ENCODE measurements at regions of chr3 and their contacts with region 1.

Region 1: DNA sequence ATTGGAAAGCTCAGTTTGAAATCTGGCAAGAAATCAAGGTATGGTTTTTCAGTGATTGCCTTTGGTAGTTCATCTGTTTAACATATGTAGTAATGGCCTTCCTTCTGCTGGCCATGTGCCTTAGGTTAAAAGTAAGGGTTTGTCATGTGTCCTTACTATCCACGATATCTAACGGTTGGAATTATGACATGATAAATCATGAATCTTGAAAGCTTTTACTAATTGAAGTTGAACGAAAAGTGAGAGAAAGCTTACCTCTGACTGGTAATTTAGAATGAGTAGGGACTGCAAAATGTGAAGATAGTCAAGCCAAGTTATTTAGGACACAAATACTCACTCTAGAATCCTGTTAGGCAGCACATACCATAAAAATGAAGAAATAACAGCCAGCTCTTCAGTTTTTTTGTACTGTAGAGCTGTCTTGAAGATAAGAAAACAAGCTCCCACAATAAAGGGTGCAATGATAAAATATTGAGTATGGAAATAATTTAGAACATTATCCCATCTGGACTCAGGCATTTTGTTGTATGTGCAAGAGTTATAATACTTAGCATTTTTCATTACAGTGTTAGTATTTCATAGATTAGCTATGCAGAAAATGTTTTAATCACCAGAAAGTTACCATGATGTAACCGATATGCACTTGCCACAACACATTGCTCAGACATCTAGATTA is 303.4 kb downstream of the ZNF385D start:
- DNase-seq: no peak
- ATAC-seq: no peak
- H3K4me3 ChIP-seq: no peak overlapping the region
- H3K27ac ChIP-seq: no peak overlapping the region
- H3K4me1 ChIP-seq: no peaks in the 10 kb centered on the region
- H3K27me3 ChIP-seq: no peaks in the 10 kb centered on the region
- CTCF ChIP-seq: no peak
- EP300 ChIP-seq: no peak
- POLR2A ChIP-seq: no peak
- RAD21 ChIP-seq: no peak

Region 2: DNA sequence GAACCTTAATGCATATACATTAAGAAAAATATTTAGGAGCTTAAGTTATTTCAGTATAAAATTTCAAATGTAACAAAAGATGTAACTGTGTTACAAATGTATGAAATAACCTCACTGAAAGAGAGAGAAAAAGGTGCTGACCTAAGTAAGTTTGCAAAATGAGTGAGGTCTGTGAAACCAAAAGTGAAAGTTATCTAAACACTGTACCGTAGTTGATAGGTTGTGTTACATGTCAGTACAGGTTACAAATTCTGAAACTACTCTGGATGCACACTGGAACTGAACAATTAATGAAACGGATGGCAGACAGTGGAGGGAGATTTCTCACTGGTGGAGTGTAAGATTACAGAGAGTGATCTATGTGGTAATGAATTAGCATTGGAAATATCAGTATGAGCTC is 117.3 kb before region 1 on chr3:
- CTCF ChIA-PET with region 1: interaction called, 5 read pairs
- POLR2A ChIA-PET with region 1: no interaction called
- RAD21 ChIA-PET with region 1: interaction called, 11 read pairs
- SMC1A ChIA-PET with region 1: interaction called, 15 read pairs
- in situ Hi-C with region 1: no loop called
- intact Hi-C with region 1: no loop called
- DNase-seq: peak; percentile 9
- ATAC-seq: peak; percentile 98
- H3K4me3 ChIP-seq: no peak overlapping the region
- H3K27ac ChIP-seq: no peak overlapping the region
- H3K4me1 ChIP-seq: no peaks in the 10 kb centered on the region
- H3K27me3 ChIP-seq: no peaks in the 10 kb centered on the region
- CTCF ChIP-seq: no peak
- EP300 ChIP-seq: no peak
- POLR2A ChIP-seq: no peak
- RAD21 ChIP-seq: no peak

Region 3: DNA sequence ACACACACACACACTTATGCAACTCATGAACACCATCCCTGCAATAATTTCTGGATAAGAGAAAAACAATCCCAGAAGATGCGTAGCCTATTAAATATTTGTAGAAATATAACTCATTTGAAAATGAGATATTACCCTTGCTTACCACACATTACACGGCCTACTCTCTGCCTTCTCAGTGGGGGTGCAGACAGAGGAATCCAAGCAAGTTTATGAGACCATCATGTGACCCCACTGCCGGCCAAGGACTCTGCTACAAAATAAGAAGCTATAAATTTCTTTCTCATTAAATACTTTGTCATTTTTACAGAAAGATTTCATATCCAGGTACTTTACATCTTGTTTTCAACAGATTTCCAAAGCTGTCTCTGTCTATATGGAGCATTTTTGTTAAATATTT is 17.1 kb after region 1 on chr3:
- CTCF ChIA-PET with region 1: interaction called, 5 read pairs
- POLR2A ChIA-PET with region 1: interaction called, 3 read pairs
- RAD21 ChIA-PET with region 1: interaction called, 12 read pairs
- SMC1A ChIA-PET with region 1: interaction called, 29 read pairs
- in situ Hi-C with region 1: no loop called
- intact Hi-C with region 1: no loop called
- DNase-seq: no peak
- ATAC-seq: peak; percentile 48; the same call in 1 of the 3 replicates
- H3K4me3 ChIP-seq: no peak overlapping the region
- H3K27ac ChIP-seq: no peak overlapping the region
- H3K4me1 ChIP-seq: no peaks in the 10 kb centered on the region
- H3K27me3 ChIP-seq: no peaks in the 10 kb centered on the region
- CTCF ChIP-seq: no peak
- EP300 ChIP-seq: no peak
- POLR2A ChIP-seq: no peak
- RAD21 ChIP-seq: no peak